ENCODE measurements at regions of chr17 and their contacts with region 1.

Region 1: GRCh38 chr17:49249292-49249794 is 18.8 kb upstream of the PHOSPHO1 start:
- DNase-seq: no peak
- ATAC-seq: no peak
- H3K4me3 ChIP-seq: no peak overlapping the region
- H3K4me3 Mint-ChIP-seq: no peak overlapping the region
- H3K27ac ChIP-seq: no peak overlapping the region
- H3K27ac Mint-ChIP-seq: no peak overlapping the region
- H3K4me1 ChIP-seq: no peaks in the 10 kb centered on the region
- H3K4me1 Mint-ChIP-seq: peaks cover 6% of the 10 kb centered on the region
- H3K27me3 ChIP-seq: peaks cover 0 to 7% (median 0%) of the 10 kb centered on the region in 4 experiments
- H3K27me3 Mint-ChIP-seq: peaks cover 23% of the 10 kb centered on the region
- CTCF ChIP-seq: no peak

Region 2: GRCh38 chr17:48908853-48909480 is 340.4 kb before region 1 on chr17:
- CTCF ChIA-PET with region 1: no interaction called
- POLR2A ChIA-PET with region 1: no interaction called
- intact Hi-C with region 1: no loop called
- DNase-seq: peak; percentile 84
- ATAC-seq: peak; percentile 50
- H3K4me3 ChIP-seq: peak overlapping the region; percentile 19 to 79 (median 72)
- H3K4me3 Mint-ChIP-seq: peak overlapping the region; percentile 92
- H3K27ac ChIP-seq: peak overlapping the region; percentile 78 to 82
- H3K27ac Mint-ChIP-seq: peak overlapping the region; percentile 91
- H3K4me1 ChIP-seq: peaks cover 26 to 30% of the 10 kb centered on the region in 2 donors
- H3K4me1 Mint-ChIP-seq: peaks cover 50% of the 10 kb centered on the region
- H3K27me3 ChIP-seq: no peaks in the 10 kb centered on the region
- H3K27me3 Mint-ChIP-seq: no peaks in the 10 kb centered on the region
- CTCF ChIP-seq: no peak

Region 3: GRCh38 chr17:49003623-49004511 is 245.5 kb before region 1 on chr17:
- CTCF ChIA-PET with region 1: no interaction called
- POLR2A ChIA-PET with region 1: no interaction called
- intact Hi-C with region 1: no loop called
- DNase-seq: no peak
- ATAC-seq: no peak
- H3K4me3 ChIP-seq: no peak overlapping the region
- H3K4me3 Mint-ChIP-seq: no peak overlapping the region
- H3K27ac ChIP-seq: no peak overlapping the region
- H3K27ac Mint-ChIP-seq: no peak overlapping the region
- H3K4me1 ChIP-seq: peaks cover under 1 to 7% of the 10 kb centered on the region in 2 donors
- H3K4me1 Mint-ChIP-seq: peaks cover 1% of the 10 kb centered on the region
- H3K27me3 ChIP-seq: peaks cover 4 to 68% (median 60%) of the 10 kb centered on the region in 4 experiments
- H3K27me3 Mint-ChIP-seq: peaks cover 79% of the 10 kb centered on the region
- CTCF ChIP-seq: no peak

Region 4: DNA sequence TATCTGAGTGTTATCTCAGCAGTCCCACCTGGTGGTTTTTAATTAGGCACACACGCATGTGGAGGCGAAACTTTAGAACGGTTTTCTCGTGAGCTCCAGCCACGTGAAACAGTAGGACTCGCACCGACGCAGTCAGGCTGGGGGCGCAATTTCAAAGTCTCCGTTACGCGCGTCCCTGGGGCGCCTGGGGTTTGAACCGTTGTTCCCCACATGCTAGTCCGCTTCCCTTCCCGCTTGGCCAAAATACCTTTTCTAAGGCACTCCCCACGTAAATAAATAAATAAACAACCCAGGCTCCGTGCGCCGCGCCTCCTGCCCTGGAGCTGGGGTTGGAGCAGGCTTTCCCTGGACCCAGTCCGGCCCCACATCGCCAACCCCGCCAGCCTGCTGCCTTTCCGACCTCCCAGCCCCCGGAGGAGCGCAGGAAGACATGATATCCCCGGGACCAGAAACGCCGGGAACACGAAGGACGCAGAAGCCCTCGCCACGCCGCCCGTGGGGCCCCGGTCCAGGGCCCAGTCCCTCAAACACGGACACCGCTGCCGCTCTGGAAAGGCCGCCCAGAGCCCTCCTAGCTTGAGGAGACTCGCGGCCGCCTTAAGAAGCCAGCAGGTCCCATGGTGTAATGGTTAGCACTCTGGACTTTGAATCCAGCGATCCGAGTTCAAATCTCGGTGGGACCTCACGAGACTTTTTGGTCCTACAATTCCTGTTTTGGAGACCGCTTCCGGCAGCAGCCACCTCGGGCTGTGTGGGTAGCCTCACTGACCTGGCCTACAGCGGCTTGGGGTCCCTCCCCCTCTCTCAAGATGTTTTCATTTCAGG is 57.2 kb before region 1 on chr17:
- CTCF ChIA-PET with region 1: no interaction called
- POLR2A ChIA-PET with region 1: no interaction called
- intact Hi-C with region 1: no loop called
- DNase-seq: peak; percentile 93
- ATAC-seq: peak; percentile 42
- H3K4me3 ChIP-seq: peak overlapping the region; percentile 76 to 95 (median 88)
- H3K4me3 Mint-ChIP-seq: peak overlapping the region; percentile 93
- H3K27ac ChIP-seq: peak overlapping the region; percentile 92 to 95
- H3K27ac Mint-ChIP-seq: peak overlapping the region; percentile 97
- H3K4me1 ChIP-seq: peaks cover 11 to 23% of the 10 kb centered on the region in 2 donors
- H3K4me1 Mint-ChIP-seq: peaks cover 32% of the 10 kb centered on the region
- H3K27me3 ChIP-seq: no peaks in the 10 kb centered on the region
- H3K27me3 Mint-ChIP-seq: no peaks in the 10 kb centered on the region
- CTCF ChIP-seq: peak; percentile 66

Region 5: GRCh38 chr17:49260011-49260921 is 10.9 kb after region 1 on chr17:
- CTCF ChIA-PET with region 1: no interaction called
- POLR2A ChIA-PET with region 1: interaction called, 11 read pairs
- intact Hi-C with region 1: no loop called
- DNase-seq: peak; percentile 72
- ATAC-seq: peak; percentile 80
- H3K4me3 ChIP-seq: peak overlapping the region; percentile 26 to 68 (median 52)
- H3K4me3 Mint-ChIP-seq: peak overlapping the region; percentile 86
- H3K27ac ChIP-seq: peak overlapping the region in 1 of 2 donors; percentile 12
- H3K27ac Mint-ChIP-seq: no peak overlapping the region
- H3K4me1 ChIP-seq: peaks cover 13 to 14% of the 10 kb centered on the region in 2 donors
- H3K4me1 Mint-ChIP-seq: peaks cover 12% of the 10 kb centered on the region
- H3K27me3 ChIP-seq: peaks cover 0 to 26% (median 4%) of the 10 kb centered on the region in 4 experiments
- H3K27me3 Mint-ChIP-seq: peaks cover 22% of the 10 kb centered on the region
- CTCF ChIP-seq: no peak

Region 6: GRCh38 chr17:49434821-49435670 is 185.7 kb after region 1 on chr17:
- CTCF ChIA-PET with region 1: no interaction called
- POLR2A ChIA-PET with region 1: no interaction called
- intact Hi-C with region 1: no loop called
- DNase-seq: peak; percentile 57
- ATAC-seq: peak; percentile 33
- H3K4me3 ChIP-seq: no peak overlapping the region
- H3K4me3 Mint-ChIP-seq: no peak overlapping the region
- H3K27ac ChIP-seq: no peak overlapping the region
- H3K27ac Mint-ChIP-seq: no peak overlapping the region
- H3K4me1 ChIP-seq: peaks cover 10 to 11% of the 10 kb centered on the region in 2 donors
- H3K4me1 Mint-ChIP-seq: peaks cover 10% of the 10 kb centered on the region
- H3K27me3 ChIP-seq: peaks cover 0 to 29% (median 5%) of the 10 kb centered on the region in 4 experiments
- H3K27me3 Mint-ChIP-seq: peaks cover 39% of the 10 kb centered on the region
- CTCF ChIP-seq: peak; percentile 74

Measured in B cell (primary cell).